CD4-positive, alpha-beta T cell (primary cell): ENCODE measurements at regions of chr10 and their contacts with region 1.

Region 1: DNA sequence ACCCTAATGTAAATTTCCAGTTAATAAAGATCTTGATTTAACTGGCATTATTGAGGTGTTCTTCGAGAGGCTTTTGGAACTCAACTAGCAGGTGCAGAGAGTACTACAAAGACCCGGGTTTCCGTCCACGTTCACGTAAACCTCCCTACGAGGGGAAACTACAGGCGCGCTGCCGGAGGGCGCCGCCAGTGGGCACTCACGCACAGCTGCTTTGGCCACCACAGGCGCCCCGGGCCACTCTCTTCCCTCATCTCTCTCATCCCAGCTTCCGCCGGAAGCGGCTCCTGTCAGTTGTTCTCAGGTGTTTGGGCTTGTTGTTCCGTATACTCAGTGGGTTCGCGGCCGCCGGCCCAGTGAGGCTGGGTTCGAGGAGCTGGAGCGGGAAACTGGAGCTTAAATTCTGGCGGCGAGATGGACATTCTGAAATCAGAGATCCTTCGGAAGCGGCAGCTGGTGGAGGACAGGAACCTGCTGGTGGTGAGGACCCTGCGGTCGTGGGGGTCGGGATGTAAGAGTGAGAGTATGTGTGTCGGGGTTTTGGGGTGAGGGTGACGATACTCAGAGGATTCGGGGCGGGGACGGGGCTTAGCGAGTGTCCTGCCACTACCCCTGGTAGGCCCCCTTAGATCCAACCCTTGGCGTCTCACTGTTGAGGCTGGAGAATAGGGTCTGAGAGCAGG is at the start of gene PRPF18:
- DNase-seq: peak; percentile 92 to 96 (median 95)
- ATAC-seq: peak; percentile 99
- H3K4me3 ChIP-seq: peak within 1 kb of the TSS; percentile 71
- H3K4me3 Mint-ChIP-seq: peak within 1 kb of the TSS; percentile 99
- H3K27ac ChIP-seq: peak within 1 kb of the TSS in 1 of 2 donors; percentile 26
- H3K27ac Mint-ChIP-seq: peak within 1 kb of the TSS; percentile 85
- H3K4me1 ChIP-seq: peaks cover 13% of the 10 kb centered on the region
- H3K4me1 Mint-ChIP-seq: peaks cover 47% of the 10 kb centered on the region
- H3K27me3 ChIP-seq: peaks cover 12 to 15% of the 10 kb centered on the region in 2 experiments
- H3K27me3 Mint-ChIP-seq: peaks cover 32% of the 10 kb centered on the region
- CTCF ChIP-seq: peak; percentile 94
- total RNA-seq, gene PRPF18: 20.7 to 22.7 TPM

Region 2: DNA sequence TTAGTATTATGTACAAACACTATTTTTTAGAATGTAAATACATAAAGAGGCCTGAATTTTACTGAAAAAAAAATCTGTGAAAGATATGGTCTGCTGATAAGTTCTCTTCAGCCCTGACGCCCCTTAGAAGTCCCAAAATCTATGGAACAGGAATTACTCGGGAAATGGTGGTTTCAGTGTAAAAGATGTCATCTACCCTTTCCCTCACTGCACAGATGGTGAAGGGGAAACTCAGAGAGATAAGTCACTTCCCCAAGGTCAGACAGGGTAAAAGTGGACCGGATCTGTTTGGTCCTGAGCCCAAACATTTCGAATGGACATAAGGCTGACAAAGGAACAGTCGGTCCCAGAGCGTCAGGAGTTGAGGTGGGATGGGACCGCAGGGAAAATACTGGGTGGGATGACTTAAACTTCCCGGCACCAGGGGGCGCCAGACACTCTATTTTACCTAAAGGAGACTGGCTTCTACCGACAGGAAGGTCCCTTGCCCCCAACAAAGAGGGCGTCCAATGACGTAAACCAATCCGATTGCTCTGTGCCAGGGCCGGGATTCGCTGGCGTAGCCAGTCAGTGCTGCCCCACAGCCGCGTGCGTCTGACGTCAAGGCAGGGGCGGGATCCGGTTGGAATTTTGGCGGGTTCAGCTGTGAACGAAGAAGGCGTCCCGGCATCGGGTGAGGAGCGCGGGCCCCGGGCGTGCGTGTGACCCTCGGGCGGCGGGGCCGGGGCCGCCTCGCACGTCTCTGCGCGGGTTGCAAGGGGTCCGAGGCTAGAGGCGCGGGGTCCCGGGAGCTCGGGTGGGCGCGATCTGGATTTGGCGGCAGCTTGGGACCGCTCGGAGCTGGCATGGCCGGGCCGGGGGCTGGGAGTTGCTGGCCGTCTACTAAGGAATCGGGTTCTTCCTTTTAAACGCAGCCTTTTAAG is 425.6 kb before region 1 on chr10 and contains the start of gene MCM10:
- CTCF ChIA-PET with region 1: interaction called, 8 read pairs
- POLR2A ChIA-PET with region 1: interaction called, 3 read pairs
- intact Hi-C with region 1: loop called (anchors 2 to 10 kb)
- DNase-seq: peak; percentile 93 to 99 (median 96)
- ATAC-seq: peak; percentile 100
- H3K4me3 ChIP-seq: peak within 1 kb of the TSS; percentile 53
- H3K4me3 Mint-ChIP-seq: peak within 1 kb of the TSS; percentile 91
- H3K27ac ChIP-seq: peak within 1 kb of the TSS in 1 of 2 donors; percentile 24
- H3K27ac Mint-ChIP-seq: peak within 1 kb of the TSS; percentile 72
- H3K4me1 ChIP-seq: peaks cover 12% of the 10 kb centered on the region
- H3K4me1 Mint-ChIP-seq: peaks cover 16% of the 10 kb centered on the region
- H3K27me3 ChIP-seq: no peaks in the 10 kb centered on the region
- H3K27me3 Mint-ChIP-seq: no peaks in the 10 kb centered on the region
- CTCF ChIP-seq: peak; percentile 94
- total RNA-seq, gene MCM10: 0.16 to 0.50 TPM

Region 3: DNA sequence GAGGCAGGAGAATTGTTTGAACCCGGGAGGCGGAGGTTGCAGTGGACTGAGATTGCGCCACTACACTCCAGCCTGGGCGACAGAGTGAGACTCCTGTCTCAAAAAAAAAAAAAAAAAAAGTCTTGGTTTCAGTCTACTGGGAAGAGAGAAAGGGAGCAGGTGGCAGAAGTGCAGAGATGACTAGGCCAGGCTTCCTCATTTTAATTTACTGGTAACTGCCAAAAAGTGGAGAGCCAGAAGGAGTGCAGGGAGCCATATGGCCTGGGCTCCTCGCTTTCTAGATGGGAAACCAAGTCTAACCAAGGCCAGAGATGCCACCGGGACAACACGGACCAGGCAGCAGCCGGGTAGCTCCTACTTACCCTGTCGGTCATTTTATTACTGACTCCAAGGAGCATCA is 250.9 kb before region 1 on chr10:
- CTCF ChIA-PET with region 1: no interaction called
- POLR2A ChIA-PET with region 1: no interaction called
- intact Hi-C with region 1: no loop called
- DNase-seq: no peak
- ATAC-seq: no peak
- H3K4me3 ChIP-seq: no peak overlapping the region
- H3K4me3 Mint-ChIP-seq: no peak overlapping the region
- H3K27ac ChIP-seq: no peak overlapping the region
- H3K27ac Mint-ChIP-seq: no peak overlapping the region
- H3K4me1 ChIP-seq: peaks cover 8% of the 10 kb centered on the region
- H3K4me1 Mint-ChIP-seq: peaks cover 30% of the 10 kb centered on the region
- H3K27me3 ChIP-seq: no peaks in the 10 kb centered on the region
- H3K27me3 Mint-ChIP-seq: no peaks in the 10 kb centered on the region
- CTCF ChIP-seq: no peak

Region 4: DNA sequence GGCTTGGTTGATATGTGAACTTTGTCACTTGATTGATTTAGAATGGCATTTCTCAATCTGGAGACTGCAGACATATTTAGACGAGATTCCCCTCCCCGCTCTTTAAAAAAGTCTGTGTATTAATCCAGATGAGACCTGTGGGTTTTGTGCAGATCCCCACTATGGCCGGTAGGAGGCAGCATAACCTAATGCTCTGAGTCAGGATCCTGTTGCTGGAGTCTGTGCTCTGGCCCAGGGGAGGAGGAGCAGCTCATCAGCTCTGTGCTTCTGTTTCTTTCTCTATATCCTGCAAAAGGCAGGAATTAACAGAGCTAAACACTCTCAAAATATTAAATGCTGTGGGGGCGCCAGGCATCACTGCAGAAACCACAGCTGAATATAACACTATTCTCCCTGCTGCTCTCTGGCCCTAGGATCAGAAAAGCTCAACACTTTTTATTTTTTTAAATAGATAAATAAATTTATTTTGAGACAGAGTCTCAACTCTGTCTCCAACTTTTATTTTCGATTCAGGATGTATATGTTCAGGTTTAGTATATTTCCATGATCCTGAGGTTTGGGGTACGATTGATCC is 214.8 kb before region 1 on chr10:
- CTCF ChIA-PET with region 1: interaction called, 7 read pairs
- POLR2A ChIA-PET with region 1: no interaction called
- intact Hi-C with region 1: loop called in 1 of 2 experiments (anchors 5 kb)
- DNase-seq: peak; percentile 18 to 88 (median 56)
- ATAC-seq: peak; percentile 100
- H3K4me3 ChIP-seq: no peak overlapping the region
- H3K4me3 Mint-ChIP-seq: no peak overlapping the region
- H3K27ac ChIP-seq: no peak overlapping the region
- H3K27ac Mint-ChIP-seq: no peak overlapping the region
- H3K4me1 ChIP-seq: no peaks in the 10 kb centered on the region
- H3K4me1 Mint-ChIP-seq: peaks cover 6% of the 10 kb centered on the region
- H3K27me3 ChIP-seq: no peaks in the 10 kb centered on the region
- H3K27me3 Mint-ChIP-seq: peaks cover 3% of the 10 kb centered on the region
- CTCF ChIP-seq: peak; percentile 79

Region 5: DNA sequence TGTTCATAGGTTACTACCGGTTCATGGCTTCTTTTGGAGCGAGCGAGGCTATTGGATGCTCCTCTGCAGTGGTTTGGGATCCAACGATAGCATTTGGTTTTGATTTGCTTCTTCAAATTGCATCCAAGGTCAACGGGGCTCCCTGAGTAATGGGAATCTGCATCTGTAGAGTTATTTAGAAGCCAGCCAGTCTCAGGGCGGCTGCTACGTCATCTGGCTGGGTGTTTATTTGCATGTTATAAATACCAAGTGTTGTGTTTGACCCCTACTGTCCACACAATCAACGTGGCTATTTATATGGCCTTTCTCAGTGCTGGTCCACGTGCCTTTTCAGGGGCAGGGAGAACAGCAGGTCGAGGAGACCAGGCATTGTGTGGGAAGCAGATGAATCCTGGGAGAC is 137.7 kb after region 1 on chr10:
- CTCF ChIA-PET with region 1: no interaction called
- POLR2A ChIA-PET with region 1: no interaction called
- intact Hi-C with region 1: no loop called
- DNase-seq: no peak
- ATAC-seq: no peak
- H3K4me3 ChIP-seq: no peak overlapping the region
- H3K4me3 Mint-ChIP-seq: no peak overlapping the region
- H3K27ac ChIP-seq: no peak overlapping the region
- H3K27ac Mint-ChIP-seq: no peak overlapping the region
- H3K4me1 ChIP-seq: no peaks in the 10 kb centered on the region
- H3K4me1 Mint-ChIP-seq: no peaks in the 10 kb centered on the region
- H3K27me3 ChIP-seq: no peaks in the 10 kb centered on the region
- H3K27me3 Mint-ChIP-seq: no peaks in the 10 kb centered on the region
- CTCF ChIP-seq: no peak

Region 6: DNA sequence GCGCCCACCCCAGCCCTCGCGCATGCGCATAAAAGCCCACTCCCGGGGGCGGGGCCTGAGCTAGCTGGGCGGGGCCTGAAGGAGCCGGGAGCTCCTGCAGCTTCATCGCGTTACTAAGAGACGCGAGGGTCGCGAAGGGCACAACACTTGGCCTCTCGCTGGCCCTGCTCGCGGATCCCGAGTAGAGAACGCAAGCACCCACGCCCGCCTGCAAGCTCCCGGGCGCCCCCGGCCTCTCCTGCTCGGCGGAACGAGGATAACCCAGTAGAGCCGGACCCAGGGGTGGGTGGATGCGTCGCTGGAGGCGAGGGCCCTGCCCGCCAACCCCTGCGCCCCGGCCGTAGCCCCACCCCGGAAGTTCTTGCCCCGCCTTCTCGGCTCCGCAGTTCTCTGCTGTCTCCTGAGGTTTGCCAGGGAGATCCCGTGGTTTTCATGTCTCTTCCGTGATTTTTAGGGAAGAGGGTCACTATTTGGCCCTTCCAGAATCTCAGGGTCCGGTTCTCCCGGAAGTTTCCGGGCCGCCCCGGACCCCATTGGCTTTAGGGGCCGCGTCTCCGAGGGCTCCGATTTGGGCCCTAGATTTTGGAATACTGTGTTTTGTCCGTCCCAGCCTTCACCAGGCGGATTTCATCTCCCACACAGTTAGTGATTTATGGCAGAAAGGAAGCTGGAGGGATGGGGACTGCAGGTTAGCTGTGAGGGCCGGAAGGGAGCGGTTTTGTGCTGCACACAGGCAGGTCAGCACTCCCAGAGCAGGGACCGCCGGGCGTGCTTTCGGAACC is 1372.7 kb after region 1 on chr10 and contains the start of gene MEIG1:
- CTCF ChIA-PET with region 1: no interaction called
- POLR2A ChIA-PET with region 1: no interaction called
- intact Hi-C with region 1: loop called in 1 of 2 experiments (anchors 5 kb)
- DNase-seq: peak; percentile 83 to 96 (median 88)
- ATAC-seq: peak; percentile 85
- H3K4me3 ChIP-seq: peak within 1 kb of the TSS; percentile 83
- H3K4me3 Mint-ChIP-seq: peak within 1 kb of the TSS; percentile 98
- H3K27ac ChIP-seq: peak within 1 kb of the TSS; percentile 86 to 92
- H3K27ac Mint-ChIP-seq: peak within 1 kb of the TSS; percentile 98
- H3K4me1 ChIP-seq: peaks cover 30% of the 10 kb centered on the region
- H3K4me1 Mint-ChIP-seq: peaks cover 34% of the 10 kb centered on the region
- H3K27me3 ChIP-seq: no peaks in the 10 kb centered on the region
- H3K27me3 Mint-ChIP-seq: no peaks in the 10 kb centered on the region
- CTCF ChIP-seq: no peak
- total RNA-seq, gene MEIG1: not detected

Region 7: DNA sequence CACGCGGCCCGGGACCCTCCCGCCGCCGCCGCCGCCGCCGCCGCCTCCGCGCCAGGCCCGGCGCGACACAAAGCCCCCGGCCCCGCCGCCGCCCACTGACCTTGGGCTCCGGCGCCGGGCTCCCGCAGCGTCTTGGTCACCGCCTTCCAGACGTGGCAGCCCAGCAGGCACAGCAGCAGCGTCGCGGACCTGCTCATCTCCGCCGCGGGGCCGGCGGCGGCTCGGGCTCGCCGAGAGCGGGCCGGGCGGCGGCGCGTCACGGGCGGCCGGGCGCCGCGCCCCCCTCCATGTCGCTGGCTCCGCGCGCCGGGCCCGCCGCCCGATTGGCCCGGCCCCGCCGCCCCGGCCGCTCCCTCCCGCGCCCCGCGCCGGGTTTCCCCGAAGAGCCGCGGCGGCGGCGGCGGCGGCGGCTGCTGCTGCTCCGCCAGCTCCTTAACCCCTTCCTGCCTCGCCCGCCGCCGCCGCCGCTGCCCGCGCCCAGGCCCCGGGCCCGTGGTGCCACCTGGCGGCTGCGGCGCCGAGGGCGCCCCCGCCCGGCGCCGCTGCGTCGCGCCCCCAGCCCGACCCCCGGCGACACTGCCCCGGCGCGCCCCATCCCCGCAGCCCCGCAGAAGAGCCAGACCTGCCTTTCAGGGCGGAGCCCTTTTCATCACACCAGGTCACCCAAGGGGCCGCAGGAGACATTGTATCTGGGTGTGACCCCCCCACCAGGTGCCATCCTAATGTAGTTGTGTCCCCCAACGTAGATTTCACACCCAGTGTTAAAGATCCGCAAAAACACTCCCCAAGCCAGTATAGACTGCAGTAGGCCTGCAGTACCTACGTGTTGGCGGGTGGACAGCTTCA is 1784.3 kb after region 1 on chr10 and contains the start of gene FAM171A1:
- CTCF ChIA-PET with region 1: no interaction called
- POLR2A ChIA-PET with region 1: no interaction called
- intact Hi-C with region 1: loop called in 1 of 2 experiments (anchors 5 kb)
- DNase-seq: peak; percentile 47 to 88 (median 62)
- ATAC-seq: peak; percentile 79
- H3K4me3 ChIP-seq: peak within 1 kb of the TSS; percentile 43
- H3K4me3 Mint-ChIP-seq: peak within 1 kb of the TSS; percentile 83
- H3K27ac ChIP-seq: no peak within 1 kb of the TSS
- H3K27ac Mint-ChIP-seq: no peak within 1 kb of the TSS
- H3K4me1 ChIP-seq: peaks cover 16% of the 10 kb centered on the region
- H3K4me1 Mint-ChIP-seq: peaks cover 9% of the 10 kb centered on the region
- H3K27me3 ChIP-seq: peaks cover 6 to 11% of the 10 kb centered on the region in 2 experiments
- H3K27me3 Mint-ChIP-seq: peaks cover 10% of the 10 kb centered on the region
- CTCF ChIP-seq: no peak
- total RNA-seq, gene FAM171A1: 1.8 to 2.6 TPM